Mammary epithelial cell (primary cell): ENCODE measurements at regions of chr9 and their contacts with region 1.

Region 1: GRCh38 chr9:132800038-132800648 is 77.9 kb downstream of the AK8 start:
- DNase-seq: peak; percentile 57
- H3K4me3 ChIP-seq: no peak overlapping the region
- H3K27ac ChIP-seq: no peak overlapping the region
- H3K4me1 ChIP-seq: no peaks in the 10 kb centered on the region
- H3K27me3 ChIP-seq: no peaks in the 10 kb centered on the region
- CTCF ChIP-seq: peak; percentile 78 to 85

Region 2: GRCh38 chr9:131807144-131807983 is 992.8 kb before region 1 on chr9:
- CTCF ChIA-PET with region 1: no interaction called
- dilution Hi-C with region 1: no loop called
- in situ Hi-C with region 1: no loop called
- intact Hi-C with region 1: no loop called
- DNase-seq: no peak
- H3K4me3 ChIP-seq: no peak overlapping the region
- H3K27ac ChIP-seq: no peak overlapping the region
- H3K4me1 ChIP-seq: no peaks in the 10 kb centered on the region
- H3K27me3 ChIP-seq: no peaks in the 10 kb centered on the region
- CTCF ChIP-seq: no peak

Region 3: GRCh38 chr9:132507746-132508469 is 292.2 kb before region 1 on chr9:
- CTCF ChIA-PET with region 1: no interaction called
- dilution Hi-C with region 1: no loop called
- in situ Hi-C with region 1: loop called (anchors 5 to 10 kb)
- intact Hi-C with region 1: loop called (anchors 1 kb)
- DNase-seq: peak; percentile 29
- H3K4me3 ChIP-seq: no peak overlapping the region
- H3K27ac ChIP-seq: no peak overlapping the region
- H3K4me1 ChIP-seq: no peaks in the 10 kb centered on the region
- H3K27me3 ChIP-seq: peaks cover 3% of the 10 kb centered on the region
- CTCF ChIP-seq: peak; percentile 75 to 81

Region 4: DNA sequence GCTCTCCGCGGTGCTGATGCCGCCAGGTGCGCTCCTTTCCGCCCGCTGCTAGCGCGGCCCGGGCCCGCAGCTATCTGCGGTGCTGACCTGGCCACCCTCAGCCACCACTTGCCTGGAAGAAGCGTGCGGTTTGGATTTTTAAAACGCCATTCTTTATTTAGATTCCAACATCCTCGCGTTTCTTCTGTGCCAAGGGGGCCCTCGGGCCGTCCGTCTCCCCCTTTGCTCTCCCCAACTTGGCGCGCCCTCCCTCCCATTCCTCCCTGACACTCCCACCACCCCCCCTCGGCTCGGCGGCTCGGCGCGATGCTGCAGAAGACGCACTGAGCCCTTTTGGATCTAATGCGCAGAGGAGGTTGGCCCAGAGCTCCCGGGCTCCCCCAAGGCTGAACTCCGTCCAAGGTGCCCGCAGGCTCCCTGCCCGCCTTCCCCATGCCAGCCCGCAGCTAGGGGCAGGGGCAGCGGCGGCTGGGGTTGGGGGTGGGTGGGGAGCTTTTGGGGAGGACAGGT is 217.8 kb before region 1 on chr9 and contains the start of gene BARHL1:
- CTCF ChIA-PET with region 1: no interaction called
- dilution Hi-C with region 1: no loop called
- in situ Hi-C with region 1: no loop called
- intact Hi-C with region 1: loop called (anchors 1 kb)
- DNase-seq: no peak
- H3K4me3 ChIP-seq: peak within 1 kb of the TSS; percentile 29 to 38 (median 32)
- H3K27ac ChIP-seq: no peak within 1 kb of the TSS
- H3K4me1 ChIP-seq: peaks cover 5% of the 10 kb centered on the region
- H3K27me3 ChIP-seq: peaks cover 68% of the 10 kb centered on the region
- CTCF ChIP-seq: no peak
- total RNA-seq, gene BARHL1: not detected

Region 5: GRCh38 chr9:132744881-132745755 is 55.0 kb before region 1 on chr9:
- CTCF ChIA-PET with region 1: no interaction called
- dilution Hi-C with region 1: no loop called
- in situ Hi-C with region 1: no loop called
- intact Hi-C with region 1: no loop called
- DNase-seq: no peak
- H3K4me3 ChIP-seq: no peak overlapping the region
- H3K27ac ChIP-seq: no peak overlapping the region
- H3K4me1 ChIP-seq: no peaks in the 10 kb centered on the region
- H3K27me3 ChIP-seq: peaks cover 2% of the 10 kb centered on the region
- CTCF ChIP-seq: no peak

Region 6: GRCh38 chr9:132768932-132769905 is 30.9 kb before region 1 on chr9:
- CTCF ChIA-PET with region 1: no interaction called
- dilution Hi-C with region 1: no loop called
- in situ Hi-C with region 1: no loop called
- intact Hi-C with region 1: loop called (anchors 1 kb)
- DNase-seq: peak; percentile 32
- H3K4me3 ChIP-seq: peak overlapping the region; percentile 61 to 80 (median 75)
- H3K27ac ChIP-seq: peak overlapping the region; percentile 34
- H3K4me1 ChIP-seq: no peaks in the 10 kb centered on the region
- H3K27me3 ChIP-seq: no peaks in the 10 kb centered on the region
- CTCF ChIP-seq: peak; percentile 30 to 37

Region 7: DNA sequence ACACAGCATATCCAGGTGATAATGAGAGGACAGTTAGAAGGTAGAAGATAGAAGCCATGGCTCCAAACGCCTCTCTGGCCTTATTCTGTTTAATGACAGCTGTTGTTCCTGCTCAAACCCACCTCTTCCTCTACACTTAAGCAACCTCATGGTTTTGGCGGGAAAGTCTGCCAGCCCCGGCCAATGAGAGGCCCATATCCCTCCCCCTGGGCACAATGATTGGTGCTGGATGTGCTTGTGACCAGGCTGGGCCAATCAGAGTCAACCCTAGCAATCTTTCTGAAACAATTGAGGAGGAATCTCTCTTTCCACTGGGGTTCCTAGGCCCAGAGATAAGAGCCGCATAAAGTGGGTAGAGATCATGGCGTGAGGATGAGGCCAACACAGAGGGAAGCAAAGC is 173.6 kb after region 1 on chr9:
- CTCF ChIA-PET with region 1: no interaction called
- dilution Hi-C with region 1: no loop called
- in situ Hi-C with region 1: no loop called
- intact Hi-C with region 1: loop called (anchors 2 kb)
- DNase-seq: no peak
- H3K4me3 ChIP-seq: no peak overlapping the region
- H3K27ac ChIP-seq: no peak overlapping the region
- H3K4me1 ChIP-seq: peaks cover 4% of the 10 kb centered on the region
- H3K27me3 ChIP-seq: peaks cover 2% of the 10 kb centered on the region
- CTCF ChIP-seq: no peak

Region 8: GRCh38 chr9:133275105-133276000 is 475.2 kb after region 1 on chr9 and contains the start of gene ABO:
- CTCF ChIA-PET with region 1: no interaction called
- dilution Hi-C with region 1: no loop called
- in situ Hi-C with region 1: no loop called
- intact Hi-C with region 1: no loop called
- DNase-seq: no peak
- H3K4me3 ChIP-seq: peak within 1 kb of the TSS in 1 of 3 experiments; percentile 6
- H3K27ac ChIP-seq: no peak within 1 kb of the TSS
- H3K4me1 ChIP-seq: peaks cover 6% of the 10 kb centered on the region
- H3K27me3 ChIP-seq: peaks cover 26% of the 10 kb centered on the region
- CTCF ChIP-seq: no peak
- total RNA-seq, gene ABO: not detected